ENCODE measurements at regions of chr7 and their contacts with region 1.

Region 1: DNA sequence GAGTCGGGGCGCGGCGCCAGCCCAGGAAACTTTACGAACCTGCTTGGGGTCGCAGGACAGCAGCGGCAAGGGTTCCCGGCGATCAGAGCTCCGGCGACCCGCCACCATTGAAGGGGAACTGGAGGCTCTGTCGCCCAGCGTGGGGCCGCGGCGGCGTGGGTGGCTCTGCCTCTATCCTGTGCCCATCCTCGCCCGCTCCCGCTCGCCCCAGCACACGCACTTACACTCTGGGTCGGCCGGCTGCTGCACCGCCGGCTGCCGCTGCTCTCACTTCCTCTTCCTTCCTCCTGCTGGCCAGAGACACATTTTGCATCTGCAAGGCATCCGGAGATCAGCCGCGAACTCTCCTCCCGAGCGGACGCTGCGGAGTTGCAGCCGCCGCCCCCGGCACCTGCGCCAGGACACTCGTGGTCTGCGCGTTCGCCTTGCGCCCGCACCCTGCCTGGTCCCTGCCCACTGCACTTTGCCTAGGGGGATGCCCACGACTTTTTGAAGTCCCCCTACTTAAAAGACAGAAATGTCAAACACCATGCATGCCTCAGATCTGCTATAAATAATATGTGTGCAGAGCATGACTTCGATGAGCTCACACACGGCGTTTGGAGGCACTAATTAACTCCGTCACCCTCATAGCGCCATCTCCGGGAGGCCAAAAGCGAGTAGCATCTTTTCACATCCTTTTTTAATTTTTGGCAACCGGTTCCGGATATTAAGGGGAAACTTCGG is at the start of gene ELMO1:
- DNase-seq: peak; percentile 90
- H3K4me3 ChIP-seq: peak within 1 kb of the TSS; percentile 59 to 87 (median 86)
- H3K27ac ChIP-seq: peak within 1 kb of the TSS; percentile 32
- H3K4me1 ChIP-seq: peaks cover 21% of the 10 kb centered on the region
- H3K27me3 ChIP-seq: no peaks in the 10 kb centered on the region
- CTCF ChIP-seq: peak; percentile 36 to 78
- POLR2A ChIP-seq: peak; percentile 54
- total RNA-seq, gene ELMO1: 23.5 and 30.6 TPM in 2 replicates

Region 2: DNA sequence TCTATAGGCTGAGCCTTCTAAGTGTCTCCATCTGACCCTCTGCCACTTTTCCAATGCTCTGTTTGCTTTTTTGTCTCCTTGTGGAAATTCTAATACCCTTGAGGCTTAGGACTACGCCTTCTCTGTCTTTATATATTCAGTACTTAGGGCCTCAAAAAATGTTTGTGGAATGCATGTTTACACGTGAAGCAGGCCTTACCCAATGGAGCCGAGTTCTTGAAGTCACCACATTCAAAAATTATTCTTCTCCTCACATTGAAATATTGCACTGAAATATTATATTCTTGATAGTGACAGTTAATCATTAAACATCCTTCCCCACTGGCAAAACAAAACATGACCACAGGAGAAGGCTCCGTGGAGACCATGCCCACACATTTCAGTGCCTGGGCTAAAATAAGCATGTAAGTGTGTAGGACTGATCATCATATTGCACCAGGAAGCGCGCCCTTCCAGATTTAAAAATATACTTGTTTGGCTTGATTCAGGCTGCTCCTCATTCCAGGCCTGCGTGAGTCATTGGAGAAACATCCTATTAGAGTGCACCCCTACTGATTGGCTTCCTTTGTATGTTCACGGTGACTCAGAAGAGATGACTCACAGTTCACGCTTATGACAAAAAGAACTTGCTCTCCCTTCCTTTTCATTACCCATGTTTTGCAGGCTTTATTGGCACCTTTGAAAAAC is 417.1 kb before region 1 on chr7:
- CTCF ChIA-PET with region 1: no interaction called
- POLR2A ChIA-PET with region 1: no interaction called
- dilution Hi-C with region 1: no loop called
- intact Hi-C with region 1: loop called (anchors 10 kb)
- DNase-seq: peak; percentile 100
- H3K4me3 ChIP-seq: no peak overlapping the region
- H3K27ac ChIP-seq: peak overlapping the region; percentile 77
- H3K4me1 ChIP-seq: peaks cover 32% of the 10 kb centered on the region
- H3K27me3 ChIP-seq: no peaks in the 10 kb centered on the region
- CTCF ChIP-seq: no peak
- POLR2A ChIP-seq: peak; percentile 35

Region 3: GRCh38 chr7:37284805-37285231 is 164.0 kb before region 1 on chr7:
- CTCF ChIA-PET with region 1: interaction called, 59 read pairs
- POLR2A ChIA-PET with region 1: no interaction called
- dilution Hi-C with region 1: no loop called
- intact Hi-C with region 1: loop called (anchors 1 kb)
- DNase-seq: peak; percentile 80
- H3K4me3 ChIP-seq: no peak overlapping the region
- H3K27ac ChIP-seq: no peak overlapping the region
- H3K4me1 ChIP-seq: peaks cover 8% of the 10 kb centered on the region
- H3K27me3 ChIP-seq: no peaks in the 10 kb centered on the region
- CTCF ChIP-seq: peak; percentile 84 to 90
- POLR2A ChIP-seq: no peak

Region 4: GRCh38 chr7:37352974-37353948 is 95.5 kb before region 1 on chr7:
- CTCF ChIA-PET with region 1: interaction called, 10 read pairs
- POLR2A ChIA-PET with region 1: no interaction called
- dilution Hi-C with region 1: no loop called
- intact Hi-C with region 1: loop called (anchors 1 kb)
- DNase-seq: no peak
- H3K4me3 ChIP-seq: no peak overlapping the region
- H3K27ac ChIP-seq: peak overlapping the region; percentile 66
- H3K4me1 ChIP-seq: peaks cover 21% of the 10 kb centered on the region
- H3K27me3 ChIP-seq: no peaks in the 10 kb centered on the region
- CTCF ChIP-seq: peak; percentile 6 to 11
- POLR2A ChIP-seq: no peak

Region 5: GRCh38 chr7:37399876-37400421 is 48.9 kb before region 1 on chr7:
- CTCF ChIA-PET with region 1: no interaction called
- POLR2A ChIA-PET with region 1: no interaction called
- dilution Hi-C with region 1: no loop called
- intact Hi-C with region 1: no loop called
- DNase-seq: no peak
- H3K4me3 ChIP-seq: no peak overlapping the region
- H3K27ac ChIP-seq: no peak overlapping the region
- H3K4me1 ChIP-seq: peaks cover 5% of the 10 kb centered on the region
- H3K27me3 ChIP-seq: no peaks in the 10 kb centered on the region
- CTCF ChIP-seq: no peak
- POLR2A ChIP-seq: no peak

Region 6: DNA sequence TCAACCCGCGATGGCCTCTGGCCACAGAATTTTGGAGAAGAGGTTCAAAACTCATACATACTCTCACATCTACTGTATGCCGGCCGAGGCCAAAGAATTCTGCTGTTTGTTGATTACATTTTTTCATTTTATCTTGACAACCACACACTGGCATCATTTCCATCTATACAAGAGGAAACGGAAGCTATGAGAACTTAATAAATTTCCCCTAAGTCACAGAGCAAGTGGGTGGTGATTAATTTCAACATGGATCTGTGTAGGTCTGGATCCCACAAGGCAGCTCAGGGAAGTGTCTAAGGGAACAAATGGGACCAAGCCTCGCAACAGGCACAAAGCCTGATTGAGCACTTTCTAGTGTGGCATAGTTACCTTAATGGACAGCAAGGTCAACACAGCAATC is 18.2 kb before region 1 on chr7:
- CTCF ChIA-PET with region 1: interaction called, 12 read pairs
- POLR2A ChIA-PET with region 1: interaction called, 3 read pairs
- dilution Hi-C with region 1: no loop called
- intact Hi-C with region 1: loop called (anchors 2 kb)
- DNase-seq: peak; percentile 93
- H3K4me3 ChIP-seq: no peak overlapping the region
- H3K27ac ChIP-seq: peak overlapping the region; percentile 73
- H3K4me1 ChIP-seq: peaks cover 20% of the 10 kb centered on the region
- H3K27me3 ChIP-seq: no peaks in the 10 kb centered on the region
- CTCF ChIP-seq: no peak
- POLR2A ChIP-seq: no peak

Region 7: DNA sequence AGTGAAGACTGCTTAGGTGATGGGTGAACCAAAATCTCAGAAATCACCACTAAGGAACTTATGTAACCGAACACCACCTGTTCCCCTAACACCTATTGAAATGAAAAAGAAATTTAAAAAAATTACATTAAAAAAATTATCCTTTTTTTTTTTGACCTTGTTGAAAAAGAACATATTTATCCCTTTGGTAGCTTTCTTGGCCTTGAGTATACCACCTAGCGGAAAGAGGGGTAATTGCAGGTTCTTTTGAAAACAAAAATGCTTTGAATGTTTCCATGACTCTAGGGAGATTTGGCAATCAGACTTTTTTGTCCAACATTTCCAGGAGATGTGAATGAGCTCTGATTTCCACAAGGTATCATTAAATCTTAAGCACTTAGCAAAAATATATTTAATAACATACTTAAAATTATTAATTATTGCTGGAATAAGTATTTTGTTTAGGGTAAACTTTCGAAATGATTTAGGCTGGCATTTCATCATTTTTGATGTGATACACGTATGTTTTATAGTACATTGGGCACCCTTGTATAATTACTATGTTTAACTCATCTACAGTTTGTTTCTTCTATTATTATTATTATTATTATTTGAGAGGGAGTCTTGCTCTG is 46.9 kb after region 1 on chr7:
- CTCF ChIA-PET with region 1: interaction called, 28 read pairs
- POLR2A ChIA-PET with region 1: no interaction called
- dilution Hi-C with region 1: no loop called
- intact Hi-C with region 1: loop called (anchors 2 kb)
- DNase-seq: peak; percentile 52
- H3K4me3 ChIP-seq: no peak overlapping the region
- H3K27ac ChIP-seq: no peak overlapping the region
- H3K4me1 ChIP-seq: no peaks in the 10 kb centered on the region
- H3K27me3 ChIP-seq: no peaks in the 10 kb centered on the region
- CTCF ChIP-seq: peak; percentile 42 to 57
- POLR2A ChIP-seq: no peak

Measured in endothelial cell of umbilical vein (primary cell).